ENCODE measurements at regions of chr6 and their contacts with region 1.

Region 1: DNA sequence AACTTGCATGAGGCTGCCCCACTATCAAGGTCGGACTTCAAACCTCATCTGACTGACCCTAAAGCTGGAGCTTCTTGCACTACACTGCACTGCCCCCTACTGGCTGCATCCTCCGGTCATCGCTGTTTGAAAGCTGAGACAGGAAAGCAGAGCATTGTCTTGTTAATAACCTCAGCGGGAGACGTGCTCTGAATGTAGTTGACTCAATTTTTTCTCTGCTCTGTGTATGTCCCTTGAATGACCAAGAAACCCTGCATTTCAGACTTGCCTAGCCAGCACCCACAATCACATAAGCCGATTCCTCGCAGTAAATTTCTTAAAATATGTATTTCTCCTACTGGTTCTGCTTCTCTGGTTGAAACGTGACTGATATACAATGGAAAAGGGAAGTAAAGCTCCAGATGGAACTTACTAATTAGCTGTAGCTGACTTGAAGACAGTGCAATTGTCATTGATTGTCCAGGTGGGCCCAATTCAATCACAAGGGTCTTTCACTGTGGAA is 27.8 kb downstream of the TCF21 start:
- DNase-seq: peak; percentile 82 to 91 (median 84)
- ATAC-seq: peak in 3 of 4 donors; percentile 82 to 90 (median 85)
- H3K4me3 ChIP-seq: no peak overlapping the region
- H3K27ac ChIP-seq: no peak overlapping the region
- H3K4me1 ChIP-seq: peaks cover 0 to 5% (median 0%) of the 10 kb centered on the region in 12 donors
- H3K27me3 ChIP-seq: peaks cover 0 to 9% (median 0%) of the 10 kb centered on the region in 9 donors
- CTCF ChIP-seq: peak; percentile 75 to 94 (median 86)
- POLR2A ChIP-seq: no peak

Region 2: GRCh38 chr6:132530293-132530974 is 1386.3 kb before region 1 on chr6:
- intact Hi-C with region 1: loop called in 3 of 10 experiments (anchors 5 to 10 kb)
- DNase-seq: peak in 4 of 5 donors; percentile 26 to 58 (median 46)
- ATAC-seq: peak in 3 of 4 donors; percentile 44 to 72 (median 71)
- H3K4me3 ChIP-seq: no peak overlapping the region
- H3K27ac ChIP-seq: no peak overlapping the region
- H3K4me1 ChIP-seq: no peaks in the 10 kb centered on the region
- H3K27me3 ChIP-seq: peaks cover 0 to 10% (median 0%) of the 10 kb centered on the region in 9 donors
- CTCF ChIP-seq: peak; percentile 74 to 96 (median 86)
- POLR2A ChIP-seq: no peak

Region 3: GRCh38 chr6:132813173-132813856 is 1103.4 kb before region 1 on chr6:
- intact Hi-C with region 1: loop called in 1 of 10 experiments (anchors 10 kb)
- DNase-seq: peak in 4 of 5 donors; percentile 25 to 51 (median 42)
- ATAC-seq: peak in 3 of 4 donors; percentile 2 to 20 (median 10)
- H3K4me3 ChIP-seq: peak overlapping the region; percentile 64 to 96 (median 81)
- H3K27ac ChIP-seq: peak overlapping the region; percentile 54 to 99 (median 86)
- H3K4me1 ChIP-seq: peaks cover 0 to 40% (median 25%) of the 10 kb centered on the region in 12 donors
- H3K27me3 ChIP-seq: no peaks in the 10 kb centered on the region
- CTCF ChIP-seq: no peak
- POLR2A ChIP-seq: no peak

Region 4: DNA sequence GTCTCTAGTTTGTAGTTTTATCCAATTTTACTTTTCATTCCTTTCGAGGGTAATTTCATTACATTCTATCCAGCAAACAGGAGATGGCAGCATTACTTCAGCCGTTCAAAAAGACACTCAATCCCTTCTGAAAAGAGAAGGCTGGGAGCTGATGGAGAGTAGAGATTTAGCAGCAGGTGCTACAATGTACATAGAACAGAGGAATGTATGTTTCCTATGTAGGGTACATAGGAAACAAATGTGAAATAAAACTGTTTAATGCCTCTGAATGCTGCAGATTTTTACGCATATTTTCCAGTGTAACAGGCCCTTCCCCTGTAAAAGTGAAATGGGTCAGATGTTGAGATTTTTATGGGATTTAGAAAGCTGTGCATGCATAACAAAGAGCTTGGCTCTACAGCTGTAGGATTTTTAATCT is 1086.4 kb before region 1 on chr6:
- intact Hi-C with region 1: loop called in 2 of 10 experiments (anchors 10 kb)
- DNase-seq: no peak
- ATAC-seq: no peak
- H3K4me3 ChIP-seq: no peak overlapping the region
- H3K27ac ChIP-seq: no peak overlapping the region
- H3K4me1 ChIP-seq: no peaks in the 10 kb centered on the region
- H3K27me3 ChIP-seq: no peaks in the 10 kb centered on the region
- CTCF ChIP-seq: peak in 10 of 12 donors; percentile 20 to 59 (median 48)
- POLR2A ChIP-seq: no peak

Region 5: GRCh38 chr6:133184798-133185372 is 731.8 kb before region 1 on chr6:
- intact Hi-C with region 1: loop called in 1 of 10 experiments (anchors 10 kb)
- DNase-seq: no peak
- ATAC-seq: no peak
- H3K4me3 ChIP-seq: no peak overlapping the region
- H3K27ac ChIP-seq: no peak overlapping the region
- H3K4me1 ChIP-seq: no peaks in the 10 kb centered on the region
- H3K27me3 ChIP-seq: no peaks in the 10 kb centered on the region
- CTCF ChIP-seq: peak; percentile 25 to 67 (median 52)
- POLR2A ChIP-seq: no peak

Region 6: GRCh38 chr6:133568970-133569889 is 347.5 kb before region 1 on chr6:
- intact Hi-C with region 1: loop called (anchors 1 to 5 kb)
- DNase-seq: peak in 3 of 5 donors; percentile 8 to 42 (median 26)
- ATAC-seq: peak; percentile 66 to 89 (median 77)
- H3K4me3 ChIP-seq: peak overlapping the region in 11 of 12 donors; percentile 0 to 56 (median 44)
- H3K27ac ChIP-seq: peak overlapping the region in 5 of 12 donors; percentile 6 to 43 (median 28)
- H3K4me1 ChIP-seq: peaks cover 0 to 10% (median 0%) of the 10 kb centered on the region in 12 donors
- H3K27me3 ChIP-seq: peaks cover 0 to 5% (median 0%) of the 10 kb centered on the region in 9 donors
- CTCF ChIP-seq: peak; percentile 74 to 91 (median 83)
- POLR2A ChIP-seq: no peak

Region 7: DNA sequence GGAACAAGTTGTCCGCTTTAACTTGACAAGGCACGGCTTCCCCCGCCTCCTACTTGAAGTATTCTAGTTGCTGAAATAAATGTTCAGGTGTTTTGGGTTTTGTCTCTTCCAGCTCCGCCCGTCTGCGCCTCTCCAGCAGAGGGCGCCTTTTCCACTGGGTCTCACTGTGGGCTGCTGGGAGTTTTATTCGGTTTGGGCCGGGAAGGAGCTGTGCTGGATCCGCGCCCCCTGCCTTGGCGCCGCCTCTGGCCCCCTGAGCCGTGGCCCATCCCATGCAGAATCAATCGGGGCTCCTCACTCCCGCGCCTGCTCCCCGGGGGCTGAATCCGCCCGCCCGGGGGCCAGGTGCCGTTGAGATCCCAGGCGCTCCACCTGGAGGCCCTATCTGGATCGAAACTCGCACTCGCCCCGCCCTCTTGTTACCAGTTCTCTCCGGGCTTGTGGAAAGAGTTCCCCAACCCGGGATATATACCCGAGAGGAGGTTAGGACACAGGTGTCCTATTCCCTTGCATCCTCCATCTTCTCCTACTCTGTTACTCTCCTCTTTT is 78.8 kb before region 1 on chr6:
- intact Hi-C with region 1: loop called in 5 of 10 experiments (anchors 5 to 10 kb)
- DNase-seq: peak in 1 of 5 donors; percentile 68
- ATAC-seq: peak in 2 of 4 donors; percentile 24 to 28
- H3K4me3 ChIP-seq: peak overlapping the region in 9 of 12 donors; percentile 32 to 49 (median 37)
- H3K27ac ChIP-seq: no peak overlapping the region
- H3K4me1 ChIP-seq: peaks cover 0 to 6% (median 0%) of the 10 kb centered on the region in 12 donors
- H3K27me3 ChIP-seq: peaks cover 0 to 13% (median 3%) of the 10 kb centered on the region in 9 donors
- CTCF ChIP-seq: peak; percentile 28 to 58 (median 46)
- POLR2A ChIP-seq: no peak

Region 8: DNA sequence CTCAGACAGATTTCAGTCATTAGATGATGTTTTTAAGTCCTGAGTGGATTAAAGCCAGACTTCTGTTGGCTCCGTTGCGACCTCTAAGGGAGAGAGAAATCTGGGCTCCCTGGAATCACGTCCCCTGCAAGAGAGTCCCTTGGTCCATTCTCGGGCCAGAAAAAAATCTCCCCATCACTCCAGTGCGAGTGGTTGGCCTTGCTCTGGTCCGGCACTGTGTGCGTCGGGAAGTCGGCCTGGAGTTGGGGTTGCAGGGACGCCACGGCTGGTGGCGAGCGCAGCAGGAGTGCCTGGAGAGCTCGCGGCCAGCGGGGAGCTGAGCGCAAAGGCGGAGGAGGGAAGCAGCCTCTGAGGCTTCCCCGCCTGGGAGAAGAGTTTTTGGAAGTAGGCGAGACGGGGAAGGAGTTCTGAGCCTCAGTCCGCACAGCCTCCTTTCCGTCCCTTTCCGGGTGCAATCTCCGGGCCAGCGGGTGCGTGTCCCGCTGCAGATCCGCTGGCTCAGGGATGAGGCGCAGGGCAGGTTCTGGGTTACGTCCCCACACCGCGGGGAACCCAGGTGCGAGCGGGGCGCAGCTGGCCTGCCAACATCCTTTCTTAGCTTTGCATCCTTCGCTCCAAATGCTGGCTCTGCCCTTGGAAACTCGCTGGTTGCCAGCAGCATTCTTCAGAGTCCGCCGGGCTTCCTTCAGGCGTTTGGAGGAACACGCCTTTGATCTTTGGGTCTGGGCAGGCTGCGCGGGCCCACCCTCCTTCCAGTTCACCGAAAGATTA is 20.9 kb before region 1 on chr6:
- intact Hi-C with region 1: no loop called
- DNase-seq: peak; percentile 39 to 75 (median 52)
- ATAC-seq: peak; percentile 31 to 77 (median 68)
- H3K4me3 ChIP-seq: peak overlapping the region in 11 of 12 donors; percentile 7 to 74 (median 39)
- H3K27ac ChIP-seq: peak overlapping the region in 11 of 12 donors; percentile 34 to 89 (median 74)
- H3K4me1 ChIP-seq: peaks cover 0 to 41% (median 10%) of the 10 kb centered on the region in 12 donors
- H3K27me3 ChIP-seq: peaks cover 8 to 80% (median 62%) of the 10 kb centered on the region in 9 donors
- CTCF ChIP-seq: peak in 1 of 12 donors; percentile 25
- POLR2A ChIP-seq: no peak

Measured in heart left ventricle (tissue), 16 donors.